ENCODE measurements at regions of chr7 and their contacts with region 1.

Region 1: GRCh38 chr7:28921822-28922221 is 36.3 kb downstream of the TRIL start:
- DNase-seq: peak; percentile 59
- CTCF ChIP-seq: peak; percentile 73

Region 2: DNA sequence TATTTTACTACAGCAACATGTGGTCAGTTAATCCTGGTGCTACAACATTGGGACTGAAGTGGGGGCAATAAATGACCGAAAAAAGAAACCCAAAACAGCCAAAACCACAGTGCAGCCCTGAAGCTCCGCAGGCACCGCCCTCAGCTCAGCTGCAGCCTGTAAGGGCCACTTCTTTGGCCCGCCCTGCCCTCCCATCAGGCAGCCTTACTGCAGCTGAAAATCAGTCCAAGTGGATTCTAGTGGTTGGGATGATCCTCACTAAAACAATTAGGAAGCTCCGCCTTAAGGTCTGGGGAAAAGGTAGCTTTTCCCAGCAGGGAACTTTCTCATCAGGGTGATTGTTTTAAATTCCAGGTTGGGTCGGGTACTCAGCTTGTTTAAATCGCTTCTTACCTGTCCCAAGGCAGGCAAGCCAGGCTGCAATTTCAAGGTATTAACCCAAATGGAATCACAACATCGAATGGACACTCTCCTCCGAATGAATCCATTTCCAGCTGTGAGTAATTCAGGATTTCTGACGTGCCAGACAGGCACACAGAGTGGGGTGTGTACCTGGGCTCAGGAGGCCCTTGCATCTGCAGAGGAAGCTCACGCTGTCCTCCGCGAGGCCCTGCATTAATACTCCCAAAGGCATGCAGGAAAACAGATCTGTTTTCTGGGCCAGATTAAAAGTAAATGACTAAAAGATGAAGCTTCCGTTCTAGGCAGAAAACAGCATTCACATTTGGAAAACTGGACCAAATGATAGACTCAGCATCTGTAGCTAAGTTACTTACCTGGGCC is 405.2 kb before region 1 on chr7:
- in situ Hi-C with region 1: no loop called
- DNase-seq: no peak
- CTCF ChIP-seq: no peak

Region 3: GRCh38 chr7:29105752-29106668 is 184.2 kb after region 1 on chr7:
- in situ Hi-C with region 1: loop called (anchors 5 kb)
- DNase-seq: peak; percentile 23
- CTCF ChIP-seq: peak; percentile 77